ENCODE measurements at regions of chr17 and their contacts with region 1.

Region 1: DNA sequence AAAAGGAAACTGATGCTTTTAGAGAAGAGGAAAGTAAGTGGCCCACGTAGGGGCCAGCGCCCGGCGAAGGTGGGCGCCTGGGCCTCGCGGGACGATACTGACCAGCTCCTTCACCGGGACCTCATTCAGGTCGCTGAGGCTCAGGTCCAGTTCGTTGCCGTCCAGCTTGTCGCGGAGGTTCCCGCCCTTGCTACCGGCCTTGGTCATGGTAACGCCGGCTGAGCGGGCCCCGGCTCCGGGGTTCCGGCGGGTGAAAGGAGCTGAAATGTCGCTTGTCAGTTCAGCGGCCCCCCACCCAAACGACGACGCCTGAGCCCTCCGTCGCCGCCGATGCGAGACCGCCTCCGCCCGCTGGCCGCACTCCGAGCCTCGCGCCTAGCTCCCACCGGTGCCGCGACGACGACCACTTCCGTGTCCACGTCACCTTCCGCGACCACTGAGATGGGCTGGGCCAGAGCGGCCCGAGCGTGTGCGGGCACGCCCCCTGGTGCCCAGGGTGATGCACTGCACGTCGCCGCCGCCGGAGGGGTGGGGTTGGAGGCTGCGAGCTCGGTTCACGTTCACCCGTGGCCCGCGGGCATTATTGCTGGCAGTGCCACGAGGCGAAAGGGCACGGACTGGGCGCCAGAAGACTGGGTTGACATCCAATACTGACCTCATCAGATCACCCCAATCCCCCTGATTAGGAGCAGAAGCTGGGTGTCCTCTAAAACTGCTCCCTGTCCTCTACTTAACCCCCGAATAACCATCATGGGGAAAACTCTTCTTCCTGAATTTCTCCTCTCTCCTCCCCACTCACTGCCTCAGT is at the start of gene LRRC59:
- DNase-seq: peak; percentile 88
- ATAC-seq: peak; percentile 93
- H3K4me3 Mint-ChIP-seq: peak within 1 kb of the TSS; percentile 93
- H3K27ac Mint-ChIP-seq: no peak within 1 kb of the TSS
- H3K4me1 Mint-ChIP-seq: peaks cover 10% of the 10 kb centered on the region
- H3K27me3 Mint-ChIP-seq: peaks cover 7% of the 10 kb centered on the region
- CTCF ChIP-seq: peak; percentile 98
- total RNA-seq, gene LRRC59: 89.3 to 108 TPM (median 90.4 TPM) in 3 replicates

Region 2: GRCh38 chr17:50213026-50214022 is 184.0 kb before region 1 on chr17:
- CTCF ChIA-PET with region 1: interaction called, 10 read pairs
- POLR2A ChIA-PET with region 1: no interaction called
- DNase-seq: peak; percentile 56
- ATAC-seq: peak; percentile 71
- H3K4me3 Mint-ChIP-seq: no peak overlapping the region
- H3K27ac Mint-ChIP-seq: no peak overlapping the region
- H3K4me1 Mint-ChIP-seq: peaks cover 48% of the 10 kb centered on the region
- H3K27me3 Mint-ChIP-seq: peaks cover 10% of the 10 kb centered on the region
- CTCF ChIP-seq: no peak

Region 3: DNA sequence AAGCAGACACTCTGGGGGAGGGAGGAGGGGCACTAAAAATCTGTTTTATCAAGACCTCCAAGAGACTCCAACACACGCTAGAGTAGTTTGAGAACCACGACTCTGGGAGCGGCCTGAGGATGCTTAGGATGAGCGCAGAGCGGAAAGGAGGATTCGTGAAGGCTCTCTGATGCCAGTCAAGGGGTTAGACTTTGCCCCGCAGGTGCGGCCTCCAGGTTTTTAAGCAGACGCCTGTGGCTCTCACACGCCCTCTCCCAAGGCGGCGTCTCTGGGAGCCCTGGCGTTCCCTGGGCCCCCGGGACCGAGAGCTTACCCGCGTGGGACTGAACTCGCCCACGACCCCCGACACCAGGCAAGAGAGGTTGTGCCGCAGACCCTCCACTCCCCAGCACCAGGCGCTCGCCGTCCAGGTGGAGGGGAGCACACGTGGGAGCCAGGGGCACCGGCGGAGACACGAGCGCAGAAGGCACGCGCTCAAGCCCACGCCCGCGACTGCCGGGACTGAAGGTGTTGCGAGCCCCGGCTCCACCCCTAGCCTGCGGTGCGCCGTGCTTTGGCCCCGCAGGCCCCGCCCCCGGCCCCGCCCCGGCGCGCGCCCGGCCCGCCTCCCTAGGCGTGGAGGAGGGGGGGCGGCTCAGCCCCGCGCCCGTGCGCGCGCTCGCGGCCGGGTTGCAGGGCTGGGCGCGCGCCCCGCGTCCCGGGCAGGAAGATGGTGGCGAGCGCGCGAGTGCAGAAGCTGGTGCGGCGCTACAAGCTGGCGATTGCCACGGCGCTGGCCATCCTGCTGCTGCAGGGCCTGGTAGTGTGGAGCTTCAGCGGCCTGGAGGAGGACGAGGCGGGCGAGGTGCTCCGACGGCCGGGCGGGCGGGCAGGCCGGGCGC is 51.6 kb before region 1 on chr17 and contains the start of gene XYLT2:
- CTCF ChIA-PET with region 1: interaction called, 17 read pairs
- POLR2A ChIA-PET with region 1: interaction called, 3 read pairs
- DNase-seq: peak; percentile 82
- ATAC-seq: peak; percentile 66
- H3K4me3 Mint-ChIP-seq: peak within 1 kb of the TSS; percentile 93
- H3K27ac Mint-ChIP-seq: peak within 1 kb of the TSS; percentile 57; the same call in 1 of the 2 replicates
- H3K4me1 Mint-ChIP-seq: peaks cover 32% of the 10 kb centered on the region
- H3K27me3 Mint-ChIP-seq: peaks cover 14% of the 10 kb centered on the region
- CTCF ChIP-seq: no peak
- total RNA-seq, gene XYLT2: 35.7 to 39.7 TPM (median 37.9 TPM) in 3 replicates

Region 4: GRCh38 chr17:50412188-50412732 is 14.9 kb after region 1 on chr17:
- CTCF ChIA-PET with region 1: interaction called, 37 read pairs
- POLR2A ChIA-PET with region 1: no interaction called
- DNase-seq: no peak
- ATAC-seq: no peak
- H3K4me3 Mint-ChIP-seq: no peak overlapping the region
- H3K27ac Mint-ChIP-seq: no peak overlapping the region
- H3K4me1 Mint-ChIP-seq: 0 out of 2 replicates have a peak, but pooled peaks cover 3% of the 10 kb centered on the region
- H3K27me3 Mint-ChIP-seq: peaks cover 19% of the 10 kb centered on the region
- CTCF ChIP-seq: no peak

Region 5: GRCh38 chr17:50437409-50437808 is 40.1 kb after region 1 on chr17:
- CTCF ChIA-PET with region 1: interaction called, 24 read pairs
- POLR2A ChIA-PET with region 1: no interaction called
- DNase-seq: no peak
- ATAC-seq: no peak
- H3K4me3 Mint-ChIP-seq: no peak overlapping the region
- H3K27ac Mint-ChIP-seq: no peak overlapping the region
- H3K4me1 Mint-ChIP-seq: peaks cover 7% of the 10 kb centered on the region
- H3K27me3 Mint-ChIP-seq: no peaks in the 10 kb centered on the region
- CTCF ChIP-seq: no peak

Region 6: DNA sequence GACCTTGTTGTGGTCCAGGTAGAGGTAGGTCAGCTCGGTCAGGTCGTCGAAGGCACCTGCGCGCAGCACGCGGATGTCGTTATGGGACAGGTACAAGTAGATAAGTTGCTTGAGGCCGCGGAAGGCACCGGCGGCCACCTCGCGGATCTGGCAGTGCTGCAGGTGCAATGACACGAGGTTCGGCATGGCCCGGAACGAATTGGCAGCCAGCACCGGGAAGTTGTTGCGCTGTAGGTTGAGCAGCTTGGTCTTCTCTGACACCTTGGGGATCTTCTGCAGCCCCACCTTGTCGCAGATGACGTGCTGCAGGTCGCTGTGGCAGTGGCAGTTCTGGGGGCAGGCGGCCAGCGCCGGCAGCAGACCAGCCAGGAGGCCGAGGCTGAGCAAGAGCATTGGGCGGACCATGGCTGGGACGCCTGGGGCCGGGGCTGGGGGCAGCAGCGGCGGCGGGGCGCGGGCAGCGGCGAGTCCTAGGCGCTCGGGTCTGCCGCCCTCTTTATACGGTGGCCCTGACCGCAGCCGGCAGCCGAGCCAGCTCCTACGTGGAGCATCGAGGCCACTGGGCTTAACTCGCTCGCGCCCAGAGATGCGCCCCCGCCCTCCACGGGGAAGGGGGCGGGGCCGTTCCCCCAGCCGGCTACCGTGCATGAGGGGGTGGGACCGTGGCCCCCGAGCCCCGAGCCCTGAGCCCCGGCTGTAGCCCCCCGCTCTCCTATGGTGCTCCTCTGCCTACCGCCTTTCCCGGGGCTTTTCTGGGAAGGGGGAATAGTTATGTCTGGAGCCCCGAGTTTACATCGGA is 71.3 kb after region 1 on chr17 and contains the start of gene CHAD:
- CTCF ChIA-PET with region 1: interaction called, 40 read pairs
- POLR2A ChIA-PET with region 1: no interaction called
- DNase-seq: peak; percentile 40
- ATAC-seq: peak; percentile 41
- H3K4me3 Mint-ChIP-seq: peak within 1 kb of the TSS; percentile 61
- H3K27ac Mint-ChIP-seq: no peak within 1 kb of the TSS
- H3K4me1 Mint-ChIP-seq: peaks cover 23% of the 10 kb centered on the region
- H3K27me3 Mint-ChIP-seq: peaks cover 27% of the 10 kb centered on the region
- CTCF ChIP-seq: no peak
- total RNA-seq, gene CHAD: 0.09 TPM in 2 of 3 replicates, not detected in the other

Region 7: DNA sequence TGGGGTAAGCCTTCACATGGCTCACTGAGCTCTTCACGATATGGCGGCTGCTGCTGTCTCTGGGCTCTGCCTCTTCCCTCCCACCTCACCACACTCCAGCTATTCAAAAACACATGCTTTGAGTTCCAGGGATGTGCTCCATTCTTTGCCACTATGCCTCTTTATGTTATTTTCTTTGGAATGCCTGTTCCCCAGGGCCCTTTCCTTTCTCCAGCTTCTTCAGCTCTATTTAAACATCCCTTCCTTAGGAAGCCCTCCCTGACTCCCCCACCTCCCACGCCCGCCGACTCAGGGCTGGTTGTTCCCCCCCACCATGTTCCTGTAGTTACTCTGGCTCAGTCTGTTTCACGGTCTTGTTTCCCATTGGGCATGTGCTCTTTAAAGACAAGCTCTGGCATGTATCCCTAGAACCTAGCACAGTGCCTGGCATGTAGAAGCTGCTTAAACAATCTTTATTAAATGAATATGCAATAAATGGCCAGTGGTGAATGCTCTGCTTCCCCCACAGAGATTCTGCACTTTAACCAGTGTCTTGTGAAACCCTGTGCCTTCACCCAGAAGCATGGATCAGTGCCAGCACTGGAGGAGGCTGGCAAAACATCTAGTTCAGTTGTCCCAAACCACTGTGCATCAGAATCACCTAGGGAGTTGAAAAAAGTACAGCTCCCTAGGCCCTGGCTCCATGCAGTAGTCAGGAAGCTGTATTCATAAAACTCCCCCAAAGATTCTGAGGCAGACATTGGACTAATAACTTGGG is 117.8 kb after region 1 on chr17:
- CTCF ChIA-PET with region 1: no interaction called
- POLR2A ChIA-PET with region 1: no interaction called
- DNase-seq: no peak
- ATAC-seq: peak; percentile 40; the same call in 1 of the 2 replicates
- H3K4me3 Mint-ChIP-seq: no peak overlapping the region
- H3K27ac Mint-ChIP-seq: peak overlapping the region; percentile 37
- H3K4me1 Mint-ChIP-seq: peaks cover 21% of the 10 kb centered on the region
- H3K27me3 Mint-ChIP-seq: peaks cover 3% of the 10 kb centered on the region
- CTCF ChIP-seq: no peak

Measured in WTC11 (cell line).